Activated CD8-positive, alpha-beta T cell treated with anti-CD3 and anti-CD28 coated beads for 36 hours (primary cell): ENCODE measurements at regions of chr1 and their contacts with region 1.

Region 1: GRCh38 chr1:12078938-12079861 is 16.1 kb downstream of the TNFRSF8 start:
- DNase-seq: peak; percentile 75
- ATAC-seq: peak; percentile 79
- H3K4me3 Mint-ChIP-seq: no peak overlapping the region
- H3K27ac Mint-ChIP-seq: peak overlapping the region; percentile 20
- H3K4me1 Mint-ChIP-seq: peaks cover 22% of the 10 kb centered on the region
- H3K27me3 Mint-ChIP-seq: peaks cover 2% of the 10 kb centered on the region
- CTCF ChIP-seq: peak; percentile 75

Region 2: GRCh38 chr1:12001249-12001917 is 77.8 kb before region 1 on chr1:
- CTCF ChIA-PET with region 1: no interaction called
- POLR2A ChIA-PET with region 1: no interaction called
- intact Hi-C with region 1: no loop called
- DNase-seq: peak; percentile 87
- ATAC-seq: peak; percentile 68
- H3K4me3 Mint-ChIP-seq: no peak overlapping the region
- H3K27ac Mint-ChIP-seq: peak overlapping the region; percentile 79
- H3K4me1 Mint-ChIP-seq: no peaks in the 10 kb centered on the region
- H3K27me3 Mint-ChIP-seq: no peaks in the 10 kb centered on the region
- CTCF ChIP-seq: peak; percentile 73

Region 3: DNA sequence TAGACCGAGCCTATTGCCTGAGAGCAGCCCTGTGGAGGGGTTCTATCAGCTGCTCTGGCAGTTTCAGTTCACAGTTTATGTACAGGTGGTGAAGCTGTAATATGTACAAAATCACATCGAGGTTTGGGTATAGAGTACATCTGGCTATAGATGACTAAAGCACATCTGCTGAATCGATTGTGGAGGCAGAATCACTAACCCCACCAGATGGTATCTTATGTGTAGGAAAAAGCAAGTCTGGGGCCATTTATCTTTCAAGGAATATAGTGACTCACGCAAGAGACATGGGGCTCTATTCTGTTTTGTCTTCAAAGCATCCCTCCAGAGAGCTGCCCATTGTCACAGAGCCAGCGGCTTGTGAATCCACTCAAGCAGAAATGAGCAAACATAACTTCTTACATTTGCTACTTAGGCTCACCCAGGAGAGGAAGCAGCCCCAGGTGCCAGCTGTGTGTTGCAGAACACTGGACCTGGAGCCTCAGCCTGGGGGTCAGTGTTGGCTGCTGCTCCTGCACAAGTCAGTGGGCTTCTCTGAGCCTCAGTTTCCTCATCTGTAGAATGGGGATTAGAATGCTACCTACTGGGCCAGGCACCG is 38.6 kb before region 1 on chr1:
- CTCF ChIA-PET with region 1: interaction called, 18 read pairs
- POLR2A ChIA-PET with region 1: interaction called, 3 read pairs
- intact Hi-C with region 1: no loop called
- DNase-seq: peak; percentile 35
- ATAC-seq: peak; percentile 81
- H3K4me3 Mint-ChIP-seq: no peak overlapping the region
- H3K27ac Mint-ChIP-seq: no peak overlapping the region
- H3K4me1 Mint-ChIP-seq: peaks cover 12% of the 10 kb centered on the region
- H3K27me3 Mint-ChIP-seq: peaks cover 12% of the 10 kb centered on the region
- CTCF ChIP-seq: no peak